Right ventricle myocardium inferior (tissue), 1 donor: ENCODE measurements at regions of chr5 and their contacts with region 1.

Region 1: DNA sequence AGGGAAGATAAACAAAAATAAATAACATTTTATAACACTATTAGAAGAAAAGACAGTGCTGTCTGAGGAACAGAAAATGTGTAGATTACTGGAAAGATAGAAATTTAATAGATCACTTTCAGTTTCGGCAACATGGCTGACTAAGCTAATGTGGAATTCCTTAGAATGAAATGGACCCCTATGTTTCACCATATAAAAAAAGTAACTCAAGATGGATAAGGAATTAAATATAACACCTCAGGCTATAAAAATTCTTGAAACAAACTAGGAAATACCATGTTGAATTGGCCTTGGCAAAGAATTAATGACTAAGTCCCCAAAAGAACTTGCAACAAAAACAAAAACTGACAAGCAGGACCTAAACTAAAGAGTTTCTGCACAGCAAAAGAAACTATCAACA is 558.3 kb downstream of the CHSY3 start:
- DNase-seq: no peak
- ATAC-seq: no peak

Region 2: DNA sequence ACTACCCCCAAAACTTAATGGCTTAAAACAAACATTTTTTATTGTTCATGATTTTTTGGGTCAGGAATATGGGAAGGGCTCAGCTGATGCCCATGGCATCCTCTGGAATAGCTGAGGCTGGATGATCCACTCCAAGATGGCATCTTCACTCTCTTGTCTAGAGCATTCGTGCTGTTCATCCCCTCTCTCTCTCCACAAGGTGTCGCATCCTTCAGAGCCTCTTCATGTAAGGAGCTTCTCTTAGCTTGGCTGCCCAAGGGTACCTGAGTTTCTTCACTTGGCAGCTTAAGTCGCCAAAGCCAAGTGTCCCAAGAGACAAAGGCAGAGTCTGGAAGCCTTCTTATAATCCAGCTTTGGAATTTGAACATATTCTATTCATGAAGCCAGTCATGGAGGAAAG is 263.6 kb before region 1 on chr5:
- intact Hi-C with region 1: no loop called
- DNase-seq: no peak
- ATAC-seq: no peak

Region 3: DNA sequence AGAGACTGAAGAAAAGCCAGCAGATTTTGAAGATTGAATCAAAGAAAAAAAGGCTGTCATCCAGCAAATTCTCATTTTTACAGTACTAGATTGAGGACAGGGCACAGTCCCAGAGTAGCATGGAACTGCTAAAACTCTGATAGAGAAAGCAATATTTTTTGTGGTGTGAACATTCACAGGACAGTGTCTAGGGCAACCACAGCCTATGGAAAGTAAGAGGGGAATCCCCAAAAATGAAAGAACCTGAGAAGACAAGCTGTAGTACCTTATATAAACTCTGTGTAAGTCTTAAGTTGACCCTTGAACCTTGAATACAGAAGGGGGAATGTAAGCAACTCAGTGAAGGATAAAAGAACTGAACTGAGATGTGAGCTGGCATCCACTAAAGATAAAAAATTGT is 162.3 kb after region 1 on chr5:
- intact Hi-C with region 1: loop called (anchors 5 kb)
- DNase-seq: no peak
- ATAC-seq: no peak